ENCODE measurements at regions of chr3 and their contacts with region 1.

Region 1: DNA sequence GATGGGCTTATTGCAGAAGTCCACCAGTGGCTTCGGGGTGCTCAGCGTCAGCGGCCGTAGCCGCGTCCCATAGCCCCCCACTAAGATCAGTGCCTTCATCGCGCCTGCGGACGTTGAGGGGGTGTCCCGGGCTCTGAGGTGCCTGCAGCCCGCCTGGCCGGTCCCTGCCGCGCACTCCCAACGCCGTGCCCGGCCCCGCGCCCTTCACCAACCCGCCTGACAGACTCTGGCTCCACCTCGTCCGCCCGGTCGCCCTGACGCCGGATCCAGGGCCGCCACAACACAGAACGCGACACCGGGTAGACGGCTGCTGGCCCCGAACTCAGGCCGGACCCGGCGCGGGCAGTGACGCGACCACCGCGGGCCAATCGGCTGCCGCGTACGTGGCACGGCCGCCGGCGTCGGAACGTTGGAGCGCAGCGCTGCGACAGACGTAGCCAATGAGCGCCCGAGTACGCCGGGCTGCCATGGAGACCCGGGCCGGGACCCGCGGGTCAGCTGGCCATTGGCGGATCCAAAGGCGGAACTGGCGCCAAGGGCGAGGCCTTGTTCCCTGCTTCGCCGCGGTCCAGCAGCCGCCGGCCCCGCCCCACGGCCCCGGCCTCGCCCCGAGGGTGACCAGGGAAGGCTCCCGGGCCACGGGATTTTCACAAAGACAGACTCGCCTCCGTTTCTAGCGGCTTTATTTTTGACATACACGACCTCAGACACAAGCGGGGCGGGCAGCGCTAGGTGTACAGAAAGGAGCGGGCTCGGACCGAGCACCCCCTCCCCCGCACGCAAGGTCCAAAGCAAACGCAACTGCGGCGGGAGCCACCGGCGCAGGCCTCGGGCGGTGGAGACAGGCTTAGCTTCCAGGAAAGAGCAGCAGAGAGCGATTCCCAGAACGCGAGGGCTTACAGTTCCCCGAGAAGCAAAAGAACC is at the start of gene GMPPB:
- DNase-seq: peak; percentile 97
- ATAC-seq: peak; percentile 87
- H3K4me3 Mint-ChIP-seq: peak within 1 kb of the TSS; percentile 92
- H3K27ac Mint-ChIP-seq: peak within 1 kb of the TSS; percentile 96
- H3K4me1 Mint-ChIP-seq: peaks cover 22% of the 10 kb centered on the region
- H3K27me3 Mint-ChIP-seq: no peaks in the 10 kb centered on the region
- total RNA-seq, gene GMPPB: 21.0 to 32.1 TPM

Region 2: GRCh38 chr3:49539659-49540560 is 184.0 kb before region 1 on chr3:
- CTCF ChIA-PET with region 1: no interaction called
- POLR2A ChIA-PET with region 1: no interaction called
- intact Hi-C with region 1: loop called in 1 of 2 experiments (anchors 1 kb)
- DNase-seq: peak; percentile 96
- ATAC-seq: peak; percentile 96
- H3K4me3 Mint-ChIP-seq: peak overlapping the region; percentile 62
- H3K27ac Mint-ChIP-seq: no peak overlapping the region
- H3K4me1 Mint-ChIP-seq: no peaks in the 10 kb centered on the region
- H3K27me3 Mint-ChIP-seq: no peaks in the 10 kb centered on the region

Region 3: GRCh38 chr3:49689046-49689907 is 34.6 kb before region 1 on chr3 and contains the starts of genes MST1 and RNF123:
- CTCF ChIA-PET with region 1: no interaction called
- POLR2A ChIA-PET with region 1: no interaction called
- intact Hi-C with region 1: loop called in 1 of 2 experiments (anchors 1 kb)
- DNase-seq: peak; percentile 95
- ATAC-seq: peak; percentile 74
- H3K4me3 Mint-ChIP-seq: peak within 1 kb of the TSS; percentile 90
- H3K27ac Mint-ChIP-seq: peak within 1 kb of the TSS; percentile 90
- H3K4me1 Mint-ChIP-seq: peaks cover 30% of the 10 kb centered on the region
- H3K27me3 Mint-ChIP-seq: no peaks in the 10 kb centered on the region
- total RNA-seq, gene MST1: 8.7 to 9.7 TPM
- total RNA-seq, gene RNF123: 25.2 to 32.7 TPM

Region 4: GRCh38 chr3:49906004-49906743 is 182.3 kb after region 1 on chr3:
- CTCF ChIA-PET with region 1: no interaction called
- POLR2A ChIA-PET with region 1: no interaction called
- intact Hi-C with region 1: loop called (anchors 5 to 10 kb)
- DNase-seq: peak; percentile 77
- ATAC-seq: peak; percentile 45
- H3K4me3 Mint-ChIP-seq: peak overlapping the region; percentile 8
- H3K27ac Mint-ChIP-seq: peak overlapping the region; percentile 48
- H3K4me1 Mint-ChIP-seq: peaks cover 22% of the 10 kb centered on the region
- H3K27me3 Mint-ChIP-seq: no peaks in the 10 kb centered on the region

Region 5: DNA sequence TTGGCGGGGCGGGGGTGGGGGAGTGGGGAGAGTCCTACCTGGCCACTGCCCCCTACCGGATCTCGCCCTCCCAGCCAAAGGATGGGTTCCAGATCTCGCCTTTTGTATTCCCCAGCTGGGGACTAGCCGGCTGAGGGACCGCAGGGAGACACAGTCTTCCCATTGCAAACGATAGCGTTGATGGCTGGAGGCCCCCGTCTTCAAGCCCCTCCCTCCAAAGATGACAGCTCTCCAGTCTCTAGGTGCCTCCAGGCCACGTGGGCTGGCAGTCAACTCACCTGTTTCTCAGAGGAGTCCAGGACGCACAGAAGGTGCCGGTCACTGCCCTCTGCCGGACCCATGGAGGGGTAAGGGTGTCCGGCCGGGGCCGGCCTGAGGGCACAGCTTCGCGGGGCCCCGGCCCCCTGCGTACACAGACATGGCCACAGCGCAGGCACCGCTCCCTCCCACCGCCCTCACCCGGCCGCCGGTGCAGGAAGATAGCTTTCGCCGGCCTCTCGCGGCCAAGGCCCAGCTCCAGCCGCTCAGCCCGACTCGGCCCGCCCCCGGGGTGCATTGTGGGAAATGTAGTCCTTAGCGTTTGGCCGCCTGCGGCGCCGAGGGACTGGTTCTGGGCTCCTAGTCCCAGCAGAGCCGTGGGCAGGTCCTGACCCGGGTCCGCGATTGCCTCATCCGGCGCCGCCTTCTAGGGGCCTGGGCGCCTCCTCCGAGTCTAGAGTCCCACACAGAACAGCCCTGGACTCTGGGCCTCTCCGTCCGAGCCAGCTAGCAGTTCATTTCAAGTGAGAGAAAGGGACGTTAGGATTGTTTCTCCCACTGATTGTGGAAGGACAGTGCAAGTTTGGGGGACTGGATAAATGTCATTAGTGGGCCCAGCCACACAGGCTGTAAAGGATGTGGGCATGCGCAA is 205.7 kb after region 1 on chr3 and contains the start of gene MON1A:
- CTCF ChIA-PET with region 1: no interaction called
- POLR2A ChIA-PET with region 1: no interaction called
- intact Hi-C with region 1: loop called in 1 of 2 experiments (anchors 1 kb)
- DNase-seq: peak; percentile 92
- ATAC-seq: peak; percentile 97
- H3K4me3 Mint-ChIP-seq: peak within 1 kb of the TSS; percentile 85
- H3K27ac Mint-ChIP-seq: peak within 1 kb of the TSS; percentile 90
- H3K4me1 Mint-ChIP-seq: peaks cover 19% of the 10 kb centered on the region
- H3K27me3 Mint-ChIP-seq: no peaks in the 10 kb centered on the region
- total RNA-seq, gene MON1A: 7.5 to 8.3 TPM

Region 6: DNA sequence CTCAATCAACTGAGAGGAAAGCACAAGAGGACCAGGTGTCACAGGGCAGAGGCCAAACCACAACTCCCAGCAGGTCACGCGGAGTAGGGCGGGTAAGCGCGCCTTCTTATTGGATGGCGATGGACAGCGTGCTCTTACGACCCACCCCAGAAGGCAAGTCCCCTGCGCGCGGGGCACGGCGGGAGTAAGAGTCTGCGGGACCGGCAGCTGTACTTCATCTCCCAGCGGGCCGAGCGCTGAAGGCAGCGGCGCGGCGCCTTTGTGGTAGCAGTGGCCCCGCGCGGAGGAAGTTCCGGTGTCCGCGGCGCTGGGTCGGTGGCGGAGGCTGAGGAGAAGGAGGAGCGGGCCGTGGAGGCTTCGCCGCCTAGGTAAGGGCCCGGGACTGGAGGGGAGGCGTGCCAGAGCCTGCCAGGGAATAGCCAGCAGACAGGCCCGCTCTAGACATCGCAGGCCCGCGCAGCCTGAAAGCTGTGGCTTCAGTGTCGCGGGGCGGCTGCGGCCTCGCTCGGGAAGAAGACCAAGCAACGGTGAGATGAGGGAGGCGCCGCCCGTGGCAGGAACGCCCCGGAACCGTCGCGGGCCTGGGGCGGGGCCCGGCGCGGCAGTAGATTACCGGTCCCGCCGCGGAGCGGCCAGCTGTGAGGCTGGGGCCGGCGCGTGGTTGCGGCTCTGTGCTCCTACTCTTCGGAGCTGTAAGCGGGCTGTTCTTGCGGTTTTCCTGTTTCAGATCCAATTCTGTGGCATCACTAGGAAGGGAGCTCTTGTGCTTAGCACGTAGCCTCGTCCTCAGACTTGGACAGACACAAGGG is 216.2 kb after region 1 on chr3 and contains the start of gene RBM6:
- CTCF ChIA-PET with region 1: no interaction called
- POLR2A ChIA-PET with region 1: no interaction called
- intact Hi-C with region 1: loop called in 1 of 2 experiments (anchors 1 kb)
- DNase-seq: peak; percentile 98
- ATAC-seq: peak; percentile 99
- H3K4me3 Mint-ChIP-seq: peak within 1 kb of the TSS; percentile 98
- H3K27ac Mint-ChIP-seq: peak within 1 kb of the TSS; percentile 91
- H3K4me1 Mint-ChIP-seq: peaks cover 20% of the 10 kb centered on the region
- H3K27me3 Mint-ChIP-seq: no peaks in the 10 kb centered on the region
- total RNA-seq, gene RBM6: 69.3 to 75.1 TPM

Measured in activated CD4-positive, alpha-beta T cell treated with anti-CD3 and anti-CD28 coated beads for 36 hours (primary cell).